ENCODE measurements at regions of chr10 and their contacts with region 1.

Region 1: DNA sequence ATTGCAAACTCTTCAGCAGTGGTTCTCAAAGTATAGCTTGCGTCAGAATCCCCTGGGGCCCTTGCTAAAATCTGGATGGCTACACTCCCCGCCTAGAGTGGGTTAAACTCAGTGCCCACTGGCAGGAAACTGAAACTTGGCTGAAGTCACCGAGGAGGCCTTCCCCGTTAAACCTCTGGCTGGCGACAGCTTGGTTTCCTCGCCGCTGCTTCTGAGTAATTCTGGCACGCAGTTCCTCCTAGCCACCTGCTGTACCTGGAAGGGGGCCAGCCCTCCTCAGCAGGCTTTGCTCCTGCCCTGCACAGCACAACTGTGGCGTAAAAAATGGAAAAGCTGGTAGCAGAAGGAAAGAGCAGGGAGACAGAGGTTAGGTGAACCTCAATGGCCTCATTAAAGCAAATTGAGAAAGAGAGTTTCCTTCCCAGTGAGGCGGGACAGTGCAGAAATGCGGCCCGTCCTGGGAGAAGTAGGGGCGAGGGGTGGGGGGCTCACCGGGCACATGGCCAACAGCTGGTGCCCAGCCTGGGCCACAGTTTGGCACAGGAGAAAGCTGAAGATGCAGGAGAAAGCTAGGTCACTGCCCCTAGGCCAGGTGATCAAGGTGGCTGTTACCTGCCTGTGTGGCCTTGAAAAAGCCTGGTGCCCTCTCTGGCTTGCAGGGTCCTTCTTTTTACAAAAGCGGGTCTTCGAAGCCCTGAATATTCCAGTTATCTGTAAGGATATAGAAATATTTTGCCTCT is 46.6 kb downstream of the ALOX5 start:
- DNase-seq: no peak
- ATAC-seq: peak; percentile 47; the same call in 1 of the 2 replicates
- H3K4me3 ChIP-seq: no peak overlapping the region
- H3K27ac ChIP-seq: no peak overlapping the region
- H3K4me1 ChIP-seq: no peaks in the 10 kb centered on the region
- H3K27me3 ChIP-seq: no peaks in the 10 kb centered on the region
- CTCF ChIP-seq: no peak

Region 2: DNA sequence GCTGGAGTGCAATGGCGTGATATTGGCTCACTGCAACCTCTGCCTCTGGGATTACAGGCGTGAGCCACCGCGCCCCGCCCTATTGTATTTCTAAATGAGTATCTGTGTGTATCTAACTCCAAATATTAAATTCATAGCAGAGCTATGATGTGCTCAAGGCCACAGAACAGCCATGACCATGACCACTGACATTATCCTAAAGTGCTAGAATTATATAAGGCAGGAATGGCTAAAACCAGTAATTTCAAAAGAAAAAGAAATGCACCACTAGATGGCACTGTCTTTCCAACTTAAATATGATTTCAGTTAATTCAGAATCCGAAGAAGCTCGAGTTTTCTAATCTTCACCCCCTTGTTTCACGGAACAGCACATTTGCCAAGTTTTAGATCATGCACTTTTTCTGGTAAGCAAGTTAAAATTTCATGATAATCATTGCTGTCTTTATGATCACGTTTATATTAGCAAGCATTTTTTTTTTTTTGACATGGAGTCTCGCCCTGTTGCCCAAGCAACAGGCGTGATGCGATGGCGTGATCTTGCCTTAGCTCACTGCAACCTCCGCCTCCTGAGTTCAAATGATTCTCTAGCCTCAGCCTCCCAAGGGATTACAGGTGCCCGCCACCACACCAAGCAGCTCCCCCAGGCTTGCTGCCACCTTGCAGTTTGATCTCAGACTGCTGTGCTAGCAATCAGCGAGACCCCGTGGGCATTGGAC is 170.5 kb before region 1 on chr10:
- CTCF ChIA-PET with region 1: no interaction called
- POLR2A ChIA-PET with region 1: no interaction called
- in situ Hi-C with region 1: no loop called
- intact Hi-C with region 1: loop called (anchors 10 kb)
- DNase-seq: peak; percentile 60
- ATAC-seq: peak; percentile 86
- H3K4me3 ChIP-seq: peak overlapping the region; percentile 30 to 44
- H3K27ac ChIP-seq: no peak overlapping the region
- H3K4me1 ChIP-seq: no peaks in the 10 kb centered on the region
- H3K27me3 ChIP-seq: peaks cover 6% of the 10 kb centered on the region; the same call in 1 of the 2 replicates
- CTCF ChIP-seq: peak; percentile 70

Region 3: DNA sequence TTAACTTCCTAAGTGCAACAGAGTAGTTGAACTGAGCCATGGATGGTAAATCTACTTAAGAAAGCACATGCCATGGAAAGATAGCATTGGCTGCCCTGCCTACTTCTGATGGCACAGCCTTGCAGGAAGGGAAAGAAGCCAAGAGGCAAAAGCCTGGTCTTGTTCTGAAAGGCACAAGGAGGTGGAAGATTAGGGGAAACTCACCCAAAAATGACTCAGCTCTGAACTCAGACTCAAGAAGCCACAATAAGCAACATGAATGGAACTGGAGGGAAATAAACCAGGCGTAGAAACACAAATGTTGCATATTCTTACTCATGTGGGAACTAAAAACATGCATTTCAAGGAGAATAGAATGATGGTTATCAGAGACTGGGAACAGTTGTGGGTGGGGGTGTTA is 67.4 kb before region 1 on chr10:
- CTCF ChIA-PET with region 1: no interaction called
- POLR2A ChIA-PET with region 1: no interaction called
- in situ Hi-C with region 1: no loop called
- intact Hi-C with region 1: loop called (anchors 10 kb)
- DNase-seq: no peak
- ATAC-seq: no peak
- H3K4me3 ChIP-seq: no peak overlapping the region
- H3K27ac ChIP-seq: no peak overlapping the region
- H3K4me1 ChIP-seq: no peaks in the 10 kb centered on the region
- H3K27me3 ChIP-seq: peaks cover 23% of the 10 kb centered on the region
- CTCF ChIP-seq: no peak

Region 4: GRCh38 chr10:45495438-45496152 is 75.0 kb after region 1 on chr10:
- CTCF ChIA-PET with region 1: no interaction called
- POLR2A ChIA-PET with region 1: no interaction called
- in situ Hi-C with region 1: no loop called
- intact Hi-C with region 1: no loop called
- DNase-seq: no peak
- ATAC-seq: no peak
- H3K4me3 ChIP-seq: no peak overlapping the region
- H3K27ac ChIP-seq: no peak overlapping the region
- H3K4me1 ChIP-seq: no peaks in the 10 kb centered on the region
- H3K27me3 ChIP-seq: no peaks in the 10 kb centered on the region
- CTCF ChIP-seq: no peak

Region 5: DNA sequence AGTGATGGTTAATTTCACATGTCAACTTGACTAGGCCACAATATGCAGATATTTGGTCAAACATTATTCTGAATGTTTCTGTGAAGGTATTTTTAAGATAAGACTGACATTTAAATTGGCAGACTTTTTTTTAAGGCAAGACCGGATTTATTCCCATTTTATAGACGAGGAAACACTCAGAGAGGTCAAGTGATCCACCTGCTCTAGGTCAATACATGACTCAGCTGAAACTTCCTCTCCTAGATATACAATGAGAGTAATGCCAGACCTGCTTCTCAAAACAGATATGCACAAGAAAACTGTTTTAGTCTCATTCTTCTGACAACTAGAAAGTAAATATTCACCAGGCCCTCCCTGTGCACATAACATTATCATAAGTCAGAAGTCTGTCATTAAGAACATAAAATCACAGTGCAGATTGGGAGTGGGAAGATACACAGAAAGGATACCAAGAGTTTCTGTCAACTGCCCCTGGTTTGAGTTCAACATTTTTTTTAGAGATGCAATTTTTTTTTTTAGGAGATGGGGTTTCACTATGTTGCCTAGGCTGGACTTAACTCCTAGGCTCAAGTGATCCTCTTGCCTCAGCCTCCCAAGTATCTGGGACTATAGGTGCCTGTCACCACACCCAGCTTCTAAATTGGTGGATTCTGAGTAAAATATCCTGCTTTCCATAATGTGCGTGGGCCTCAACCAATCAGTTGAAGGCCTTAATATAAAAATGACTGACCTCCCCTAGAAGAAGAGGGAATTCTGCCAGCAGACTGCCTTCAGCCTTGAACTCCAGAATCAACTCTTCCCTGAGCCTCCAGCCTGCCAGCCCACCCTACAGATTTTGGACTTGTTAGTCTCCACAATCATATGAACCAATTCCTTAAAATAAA is 130.5 kb after region 1 on chr10:
- CTCF ChIA-PET with region 1: no interaction called
- POLR2A ChIA-PET with region 1: no interaction called
- in situ Hi-C with region 1: no loop called
- intact Hi-C with region 1: no loop called
- DNase-seq: no peak
- ATAC-seq: no peak
- H3K4me3 ChIP-seq: no peak overlapping the region
- H3K27ac ChIP-seq: no peak overlapping the region
- H3K4me1 ChIP-seq: no peaks in the 10 kb centered on the region; the same call in 1 of the 2 replicates
- H3K27me3 ChIP-seq: no peaks in the 10 kb centered on the region
- CTCF ChIP-seq: no peak